Activated B cell treated with CpG ODN at 0.5 μM for 24 hours (primary cell): ENCODE measurements at regions of chr14 and their contacts with region 1.

Region 1: DNA sequence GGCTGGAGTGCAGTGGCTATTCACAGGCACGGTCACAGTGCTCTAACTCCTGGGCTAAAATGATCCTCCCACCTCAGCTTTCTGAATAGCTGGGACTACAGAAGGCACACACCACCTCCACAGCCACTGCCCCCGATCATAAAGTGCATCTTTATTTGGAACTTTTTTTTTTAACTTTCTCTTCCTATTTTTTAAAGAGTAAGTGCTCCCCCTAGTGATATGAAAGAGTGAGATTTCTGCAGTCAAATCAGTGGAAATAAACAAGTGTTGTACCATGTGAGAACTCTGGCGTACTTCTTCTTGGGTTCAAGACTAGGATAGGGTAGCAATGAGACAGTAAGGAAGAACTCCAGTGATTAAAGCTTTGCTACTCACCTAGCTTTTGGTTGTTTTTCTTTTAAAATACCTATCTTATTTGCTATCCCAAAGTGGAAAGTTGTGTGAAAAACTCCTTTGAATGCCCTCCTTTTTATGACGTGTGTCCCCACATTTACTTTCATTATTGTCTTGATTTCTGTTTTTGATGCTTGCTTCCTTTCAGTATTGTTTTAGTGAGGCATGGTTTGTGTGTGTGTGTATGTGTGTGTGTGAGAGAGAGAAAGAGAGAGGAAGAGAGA is 6.6 kb downstream of the PPP4R4 start:
- DNase-seq: no peak
- ATAC-seq: peak; percentile 66
- H3K4me3 Mint-ChIP-seq: no peak overlapping the region
- H3K27ac Mint-ChIP-seq: no peak overlapping the region
- H3K4me1 Mint-ChIP-seq: peaks cover 9% of the 10 kb centered on the region
- H3K27me3 Mint-ChIP-seq: peaks cover 39% of the 10 kb centered on the region
- CTCF ChIP-seq: peak; percentile 46

Region 2: DNA sequence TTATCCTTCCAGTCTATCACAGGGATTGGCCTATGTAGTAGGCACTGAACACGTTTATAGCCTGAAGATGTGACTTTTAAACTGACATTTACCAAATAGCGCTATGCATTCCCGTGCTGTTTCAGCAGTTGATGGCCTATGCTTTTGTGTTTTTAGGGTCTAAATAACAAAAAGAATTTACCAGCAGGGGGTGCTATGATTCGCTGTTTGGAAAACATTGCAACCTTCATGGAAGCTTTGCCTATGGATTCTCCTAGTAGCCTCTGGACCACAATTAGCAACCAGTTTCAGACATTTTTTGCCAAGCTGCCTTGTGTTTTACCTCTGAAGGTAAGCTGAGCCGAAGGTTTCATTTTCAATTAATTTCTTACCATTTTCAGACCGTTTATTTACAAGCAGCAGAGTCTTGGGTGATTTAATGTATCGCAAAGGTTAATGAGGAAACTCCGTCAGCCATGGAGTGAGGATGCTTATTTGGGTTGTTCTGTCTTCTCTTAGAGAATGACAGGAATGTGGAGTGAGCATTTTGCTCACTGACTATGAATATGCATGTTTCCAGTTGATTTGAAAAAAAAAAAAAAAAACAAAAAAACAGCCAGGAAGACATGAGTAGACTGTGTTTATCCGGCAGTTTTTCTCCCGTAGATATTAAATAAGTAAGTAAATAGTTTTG is 525.5 kb before region 1 on chr14:
- CTCF ChIA-PET with region 1: interaction called, 3 read pairs
- POLR2A ChIA-PET with region 1: no interaction called
- intact Hi-C with region 1: loop called (anchors 2 kb)
- DNase-seq: no peak
- ATAC-seq: no peak
- H3K4me3 Mint-ChIP-seq: no peak overlapping the region
- H3K27ac Mint-ChIP-seq: no peak overlapping the region
- H3K4me1 Mint-ChIP-seq: no peaks in the 10 kb centered on the region
- H3K27me3 Mint-ChIP-seq: peaks cover 31% of the 10 kb centered on the region
- CTCF ChIP-seq: no peak

Region 3: DNA sequence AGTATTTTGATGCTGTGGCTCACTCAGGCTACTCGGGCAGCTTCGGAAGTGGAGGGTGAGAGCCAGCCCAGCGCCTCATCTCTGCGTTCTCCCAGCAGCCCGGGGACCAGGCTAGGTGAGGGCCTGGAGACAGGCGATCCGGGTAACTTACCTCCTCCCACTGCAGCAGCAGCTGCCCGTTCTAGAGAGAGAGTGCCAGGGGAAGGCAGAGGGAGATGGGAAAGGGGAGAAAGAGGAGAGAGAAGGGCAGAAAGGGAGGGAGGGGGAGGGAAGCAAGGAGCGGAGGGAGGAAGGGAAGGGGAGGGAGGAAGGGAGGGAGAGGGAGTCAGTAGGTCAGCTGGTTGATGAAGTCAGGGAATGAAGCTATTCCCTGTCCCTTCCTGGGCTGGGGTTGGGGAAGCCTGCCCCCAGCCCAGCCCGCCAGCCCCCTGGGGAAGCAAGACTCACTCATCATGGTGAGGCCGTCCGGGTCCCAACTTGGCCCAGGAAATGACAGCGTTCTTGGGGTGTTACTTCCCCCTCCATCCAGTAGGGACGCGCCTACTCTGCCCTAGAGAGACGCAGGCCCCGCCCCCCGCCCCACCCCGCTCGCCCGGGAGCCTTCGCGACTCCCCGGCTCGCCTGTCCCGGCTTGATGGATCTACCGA is 51.5 kb before region 1 on chr14 and contains the start of gene IFI27L2:
- CTCF ChIA-PET with region 1: interaction called, 15 read pairs
- POLR2A ChIA-PET with region 1: no interaction called
- intact Hi-C with region 1: loop called (anchors 1 kb)
- DNase-seq: peak; percentile 41
- ATAC-seq: peak; percentile 98
- H3K4me3 Mint-ChIP-seq: peak within 1 kb of the TSS; percentile 88
- H3K27ac Mint-ChIP-seq: peak within 1 kb of the TSS; percentile 54
- H3K4me1 Mint-ChIP-seq: peaks cover 19% of the 10 kb centered on the region
- H3K27me3 Mint-ChIP-seq: peaks cover 6% of the 10 kb centered on the region
- CTCF ChIP-seq: no peak
- total RNA-seq, gene IFI27L2: 37.0 and 37.3 TPM in 2 replicates

Region 4: GRCh38 chr14:94136575-94137331 is 44.0 kb before region 1 on chr14:
- CTCF ChIA-PET with region 1: interaction called, 17 read pairs
- POLR2A ChIA-PET with region 1: no interaction called
- intact Hi-C with region 1: loop called (anchors 1 kb)
- DNase-seq: peak; percentile 72
- ATAC-seq: peak; percentile 95
- H3K4me3 Mint-ChIP-seq: no peak overlapping the region
- H3K27ac Mint-ChIP-seq: no peak overlapping the region
- H3K4me1 Mint-ChIP-seq: peaks cover 3% of the 10 kb centered on the region
- H3K27me3 Mint-ChIP-seq: peaks cover 26% of the 10 kb centered on the region
- CTCF ChIP-seq: no peak

Region 5: DNA sequence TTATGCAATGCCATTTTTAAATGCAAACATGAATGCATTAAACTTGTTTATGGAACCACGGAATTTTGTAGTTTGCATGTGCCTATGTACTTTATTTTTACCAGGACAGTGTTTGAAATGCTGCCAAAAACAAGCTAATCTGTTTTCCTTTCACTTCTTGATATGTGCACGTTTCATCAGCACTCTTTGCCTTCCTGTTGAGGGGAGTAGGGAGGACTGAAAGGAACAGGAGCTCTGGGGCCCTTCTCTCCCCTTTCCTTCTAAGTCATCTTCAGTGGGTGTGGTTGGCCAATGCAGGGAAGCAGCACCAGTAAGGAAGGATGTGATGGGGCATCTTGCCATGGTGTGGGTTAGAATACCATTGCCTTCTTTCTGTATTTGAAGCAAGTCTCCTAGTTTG is 18.8 kb before region 1 on chr14:
- CTCF ChIA-PET with region 1: no interaction called
- POLR2A ChIA-PET with region 1: no interaction called
- intact Hi-C with region 1: no loop called
- DNase-seq: no peak
- ATAC-seq: no peak
- H3K4me3 Mint-ChIP-seq: no peak overlapping the region
- H3K27ac Mint-ChIP-seq: no peak overlapping the region
- H3K4me1 Mint-ChIP-seq: no peaks in the 10 kb centered on the region
- H3K27me3 Mint-ChIP-seq: peaks cover 26% of the 10 kb centered on the region
- CTCF ChIP-seq: no peak